ENCODE measurements at regions of chr10 and their contacts with region 1.

Region 1: DNA sequence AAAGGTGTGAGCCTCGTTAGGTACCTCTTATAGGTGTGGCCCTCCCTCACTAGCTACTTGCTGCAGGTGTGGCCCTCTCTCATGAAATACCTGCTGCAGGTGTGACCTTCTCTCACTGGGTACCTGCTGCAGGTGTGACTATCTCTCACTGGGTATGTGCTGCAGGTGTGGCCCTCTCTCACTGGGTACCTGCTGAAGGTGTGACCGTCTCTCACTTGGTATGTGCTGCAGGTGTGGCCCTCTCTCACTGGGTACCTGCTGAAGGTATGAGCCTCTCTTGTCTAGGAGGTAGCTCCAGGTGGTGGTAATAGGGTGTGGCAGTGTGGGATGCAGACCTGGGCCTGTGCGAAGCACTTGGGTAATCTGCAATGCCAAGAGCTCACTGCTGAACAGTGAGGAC is 170.7 kb upstream of the PLPP4 start:
- DNase-seq: no peak
- ATAC-seq: no peak
- H3K4me3 ChIP-seq: no peak overlapping the region
- H3K27ac ChIP-seq: no peak overlapping the region
- H3K4me1 ChIP-seq: no peaks in the 10 kb centered on the region
- H3K27me3 ChIP-seq: no peaks in the 10 kb centered on the region
- CTCF ChIP-seq: no peak

Region 2: DNA sequence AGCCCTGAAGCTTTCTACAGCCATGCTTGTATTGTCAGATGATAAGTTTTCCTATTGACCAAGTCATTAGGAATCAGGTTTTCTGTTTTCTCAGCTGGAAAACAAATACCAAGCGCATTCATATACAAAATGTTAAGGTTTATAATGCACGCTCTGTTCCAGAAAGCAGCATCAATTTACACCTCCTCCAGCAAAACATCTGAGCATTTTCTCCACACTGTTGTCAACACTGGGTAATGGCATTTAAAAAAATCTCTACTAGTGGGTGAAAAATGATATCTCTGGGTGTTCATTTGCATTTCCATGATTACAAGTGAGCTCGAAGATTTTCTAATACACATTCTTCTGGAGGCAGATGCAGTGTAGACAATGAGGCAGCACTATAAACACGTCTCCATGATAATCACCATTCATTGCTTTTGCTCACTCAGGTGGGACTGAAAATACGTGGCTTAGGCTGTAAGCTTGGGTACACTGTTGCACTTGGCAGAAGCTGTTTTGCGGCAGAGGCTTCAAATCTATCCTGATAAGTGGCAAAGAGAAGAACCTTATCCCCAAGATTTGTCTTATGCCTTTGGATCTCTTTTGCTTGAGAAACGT is 55.9 kb after region 1 on chr10:
- CTCF ChIA-PET with region 1: interaction called, 15 read pairs
- POLR2A ChIA-PET with region 1: no interaction called
- intact Hi-C with region 1: no loop called
- DNase-seq: no peak
- ATAC-seq: no peak
- H3K4me3 ChIP-seq: no peak overlapping the region
- H3K27ac ChIP-seq: no peak overlapping the region
- H3K4me1 ChIP-seq: no peaks in the 10 kb centered on the region
- H3K27me3 ChIP-seq: no peaks in the 10 kb centered on the region
- CTCF ChIP-seq: no peak

Region 3: DNA sequence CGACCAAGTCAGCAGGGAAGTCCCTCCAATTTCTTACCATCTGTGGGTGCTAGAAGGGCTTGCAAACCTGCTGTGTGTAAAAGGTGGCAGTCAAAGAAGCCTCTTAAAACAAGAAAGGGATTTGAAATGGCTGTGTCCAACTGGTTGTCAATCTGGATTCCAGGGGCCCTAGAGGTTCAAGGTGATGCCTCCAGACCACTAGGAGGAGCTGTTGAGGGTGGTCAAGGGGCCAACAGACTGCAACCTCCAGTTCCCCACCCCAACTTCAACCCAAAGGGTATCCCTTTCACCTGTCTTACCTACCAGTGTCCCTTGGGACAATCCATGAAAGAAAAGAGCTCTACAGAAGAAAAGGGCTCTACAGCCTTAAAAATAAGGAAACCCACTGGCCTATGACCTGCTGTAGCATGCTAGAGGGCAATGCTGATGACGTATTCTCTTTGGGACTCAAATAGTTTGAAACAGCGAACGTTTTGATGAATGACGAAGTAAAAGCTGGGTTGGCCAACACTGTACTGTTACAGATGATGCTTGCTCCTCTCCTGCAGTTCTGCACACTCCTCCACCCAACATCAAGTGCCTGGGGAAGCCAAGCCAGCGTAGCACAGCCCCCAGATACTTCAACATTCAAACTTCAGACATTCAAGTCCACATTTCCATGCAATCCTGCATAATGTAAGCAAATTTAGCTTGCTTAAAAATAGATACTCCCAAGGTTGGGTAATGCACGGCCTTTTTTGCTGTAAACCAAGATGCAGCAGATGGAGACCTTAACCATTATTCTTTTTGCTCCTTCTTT is 518.9 kb after region 1 on chr10:
- CTCF ChIA-PET with region 1: no interaction called
- POLR2A ChIA-PET with region 1: no interaction called
- intact Hi-C with region 1: no loop called
- DNase-seq: no peak
- ATAC-seq: no peak
- H3K4me3 ChIP-seq: no peak overlapping the region
- H3K27ac ChIP-seq: no peak overlapping the region
- H3K4me1 ChIP-seq: no peaks in the 10 kb centered on the region
- H3K27me3 ChIP-seq: no peaks in the 10 kb centered on the region
- CTCF ChIP-seq: no peak

Measured in PC-3 (cell line).